ENCODE measurements at regions of chr11 and their contacts with region 1.

Region 1: GRCh38 chr11:61899146-61899841 is 7.9 kb upstream of the FADS3 start:
- DNase-seq: peak; percentile 77 to 91 (median 82)
- H3K4me3 ChIP-seq: no peak overlapping the region
- H3K27ac ChIP-seq: peak overlapping the region in 1 of 5 donors; percentile 47
- H3K4me1 ChIP-seq: no peaks in the 10 kb centered on the region
- H3K27me3 ChIP-seq: no peaks in the 10 kb centered on the region
- CTCF ChIP-seq: peak; percentile 98 to 100 (median 99)
- POLR2A ChIP-seq: no peak

Region 2: DNA sequence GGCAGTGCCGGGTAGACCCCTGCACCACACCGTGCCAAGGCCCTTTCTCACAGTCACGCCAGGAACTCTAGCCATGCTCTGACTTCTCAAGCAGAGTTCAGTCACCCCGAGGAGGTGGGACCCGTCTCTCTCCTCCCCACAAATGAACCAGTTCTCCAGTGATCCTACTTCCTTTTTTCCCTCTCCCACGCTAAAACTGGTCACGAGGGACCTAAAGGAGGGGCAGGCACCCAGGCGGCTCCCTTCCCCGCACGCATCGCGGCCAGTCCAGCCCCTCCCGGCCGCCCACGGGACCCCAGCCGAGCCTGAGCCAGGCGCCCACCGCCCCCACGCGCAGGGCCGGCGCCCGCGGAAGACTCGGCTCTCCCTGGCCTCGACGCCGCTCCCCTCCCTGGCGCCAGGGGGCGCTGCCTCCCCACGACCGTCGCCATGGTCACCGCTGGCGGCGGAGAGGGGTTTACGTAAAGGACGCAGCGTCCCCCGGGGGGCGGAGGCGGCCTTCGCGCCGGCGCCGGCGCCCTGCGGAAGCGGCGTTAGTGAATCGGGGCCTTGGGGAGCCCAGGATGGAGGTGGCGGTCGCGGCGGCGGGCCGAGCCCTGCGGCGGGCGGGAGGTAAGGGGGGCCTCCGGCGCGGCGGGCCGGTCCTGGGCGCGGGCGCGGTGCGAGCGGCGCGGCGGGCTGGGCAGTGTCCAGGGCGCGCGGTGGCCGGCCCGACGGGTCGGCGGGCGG is 219.2 kb before region 1 on chr11 and contains the start of gene DAGLA:
- intact Hi-C with region 1: no loop called
- DNase-seq: peak in 6 of 7 donors; percentile 58 to 78 (median 68)
- H3K4me3 ChIP-seq: peak within 1 kb of the TSS in 2 of 4 donors; percentile 34 to 60
- H3K27ac ChIP-seq: peak within 1 kb of the TSS in 1 of 5 donors; percentile 37
- H3K4me1 ChIP-seq: peaks cover 0 to 9% of the 10 kb centered on the region in 2 donors
- H3K27me3 ChIP-seq: peaks cover 6% of the 10 kb centered on the region
- CTCF ChIP-seq: peak; percentile 58 to 99 (median 82)
- POLR2A ChIP-seq: peak in 1 of 2 donors; percentile 29
- total RNA-seq, gene DAGLA: 0.44 to 4.2 (median 2.5) TPM

Region 3: GRCh38 chr11:61947486-61948210 is 48.4 kb after region 1 on chr11:
- intact Hi-C with region 1: loop called (anchors 2 to 5 kb)
- DNase-seq: peak; percentile 85 to 97 (median 92)
- H3K4me3 ChIP-seq: no peak overlapping the region
- H3K27ac ChIP-seq: peak overlapping the region in 1 of 5 donors; percentile 23
- H3K4me1 ChIP-seq: peaks cover 0 to 6% of the 10 kb centered on the region in 2 donors
- H3K27me3 ChIP-seq: no peaks in the 10 kb centered on the region
- CTCF ChIP-seq: peak; percentile 84 to 97 (median 96)
- POLR2A ChIP-seq: peak in 1 of 2 donors; percentile 15

Measured in adrenal gland (tissue), 19 donors.